SK-N-SH (cell line): ENCODE measurements at regions of chr14 and their contacts with region 1.

Region 1: GRCh38 chr14:23539248-23540140 is 12.1 kb downstream of the ZFHX2 start:
- DNase-seq: peak; percentile 92
- H3K4me3 ChIP-seq: no peak overlapping the region
- H3K27ac ChIP-seq: peak overlapping the region in 1 of 2 experiments; percentile 30; a peak in 1 of 4 replicates
- H3K4me1 ChIP-seq: peaks cover 4 to 8% of the 10 kb centered on the region in 2 experiments; a peak in 1 of 4 replicates
- H3K27me3 ChIP-seq: no peaks in the 10 kb centered on the region
- CTCF ChIP-seq: peak; percentile 75
- EP300 ChIP-seq: no peak
- RAD21 ChIP-seq: peak; percentile 79

Region 2: DNA sequence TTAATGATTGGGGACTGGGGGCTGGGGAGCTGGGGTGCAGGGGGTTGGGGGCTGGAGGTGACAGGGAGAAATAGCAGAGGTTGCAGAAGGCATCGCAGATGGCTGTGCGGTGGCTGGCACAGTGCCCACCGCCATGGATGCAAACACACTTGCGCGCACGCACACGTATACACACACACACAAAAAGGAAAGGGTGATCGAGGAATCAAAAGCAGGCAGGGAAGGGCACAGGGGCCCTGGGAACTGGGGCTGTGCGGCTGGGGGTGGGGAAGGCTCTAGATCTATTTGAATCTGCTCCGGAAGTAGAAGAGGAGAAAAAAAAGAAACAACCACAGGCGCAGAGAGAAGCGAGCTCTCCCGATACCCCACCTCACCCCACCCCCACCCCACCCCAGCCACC is 27.3 kb before region 1 on chr14:
- CTCF ChIA-PET with region 1: interaction called, 11 read pairs
- POLR2A ChIA-PET with region 1: interaction called, 3 read pairs
- DNase-seq: peak; percentile 77
- H3K4me3 ChIP-seq: peak overlapping the region in 1 of 2 experiments; percentile 34; a peak in 2 of 4 replicates
- H3K27ac ChIP-seq: peak overlapping the region in 1 of 2 experiments; percentile 63; a peak in 1 of 4 replicates
- H3K4me1 ChIP-seq: peaks cover 0 to 38% of the 10 kb centered on the region in 2 experiments; a peak in 1 of 4 replicates
- H3K27me3 ChIP-seq: no peaks in the 10 kb centered on the region
- CTCF ChIP-seq: no peak
- EP300 ChIP-seq: no peak
- RAD21 ChIP-seq: no peak

Region 3: GRCh38 chr14:23528555-23528954 is 10.9 kb before region 1 on chr14:
- CTCF ChIA-PET with region 1: interaction called, 25 read pairs
- POLR2A ChIA-PET with region 1: interaction called, 5 read pairs
- DNase-seq: peak; percentile 59
- H3K4me3 ChIP-seq: no peak overlapping the region
- H3K27ac ChIP-seq: no peak overlapping the region; a peak in 1 of 4 replicates
- H3K4me1 ChIP-seq: peaks cover 0 to 4% of the 10 kb centered on the region in 2 experiments; a peak in 1 of 4 replicates
- H3K27me3 ChIP-seq: no peaks in the 10 kb centered on the region
- CTCF ChIP-seq: peak; percentile 33; the same call in 1 of the 2 replicates
- EP300 ChIP-seq: no peak
- RAD21 ChIP-seq: no peak

Region 4: DNA sequence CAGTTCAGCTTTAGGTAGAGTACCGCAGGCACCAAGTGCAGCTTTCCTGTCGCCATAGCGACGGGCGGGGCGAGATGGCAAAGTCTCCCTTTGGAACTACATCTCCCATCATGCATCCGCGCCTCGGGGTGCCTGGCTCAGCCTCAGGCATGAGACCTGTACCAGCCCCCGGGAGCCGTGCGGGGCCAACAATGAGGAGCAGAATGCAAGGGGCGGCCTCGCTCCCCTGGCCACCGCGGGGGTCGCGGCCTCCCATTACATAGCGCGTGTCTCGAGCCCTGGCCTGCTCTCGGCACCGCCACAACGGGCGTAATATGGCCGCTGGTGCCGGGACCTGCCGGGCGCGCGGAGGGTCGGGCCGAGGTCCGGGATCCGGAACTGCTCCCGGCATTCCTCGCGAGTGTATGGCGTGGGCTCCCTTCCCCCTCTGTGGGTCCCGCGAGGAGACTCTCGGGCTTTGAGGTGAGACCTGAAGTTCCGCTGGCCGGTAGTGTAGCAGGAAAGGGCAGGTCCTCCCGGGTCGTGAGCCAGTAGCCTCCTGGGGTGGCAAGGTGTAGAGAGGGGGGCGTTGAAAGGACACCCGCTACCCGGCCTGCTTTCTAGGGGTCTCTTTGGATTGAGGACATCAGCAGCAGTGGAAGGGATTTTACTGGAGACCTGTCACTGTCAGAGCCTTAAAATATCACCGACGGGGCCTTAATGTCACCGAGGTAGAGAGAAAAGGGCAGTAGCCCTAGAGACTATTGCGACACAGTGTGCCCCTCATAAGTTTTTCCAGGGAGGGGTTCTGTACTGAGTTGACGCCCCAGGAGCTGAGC is 16.6 kb after region 1 on chr14 and contains the start of gene THTPA:
- CTCF ChIA-PET with region 1: interaction called, 136 read pairs
- POLR2A ChIA-PET with region 1: interaction called, 5 read pairs
- DNase-seq: peak; percentile 92
- H3K4me3 ChIP-seq: peak within 1 kb of the TSS; percentile 76 to 93
- H3K27ac ChIP-seq: peak within 1 kb of the TSS; percentile 74 to 91
- H3K4me1 ChIP-seq: peaks cover 5 to 15% of the 10 kb centered on the region in 2 experiments; a peak in 1 of 4 replicates
- H3K27me3 ChIP-seq: no peaks in the 10 kb centered on the region
- CTCF ChIP-seq: no peak
- EP300 ChIP-seq: no peak
- RAD21 ChIP-seq: no peak
- polyA plus RNA-seq, gene THTPA: 15.5 and 16.3 TPM in 2 replicates

Region 5: DNA sequence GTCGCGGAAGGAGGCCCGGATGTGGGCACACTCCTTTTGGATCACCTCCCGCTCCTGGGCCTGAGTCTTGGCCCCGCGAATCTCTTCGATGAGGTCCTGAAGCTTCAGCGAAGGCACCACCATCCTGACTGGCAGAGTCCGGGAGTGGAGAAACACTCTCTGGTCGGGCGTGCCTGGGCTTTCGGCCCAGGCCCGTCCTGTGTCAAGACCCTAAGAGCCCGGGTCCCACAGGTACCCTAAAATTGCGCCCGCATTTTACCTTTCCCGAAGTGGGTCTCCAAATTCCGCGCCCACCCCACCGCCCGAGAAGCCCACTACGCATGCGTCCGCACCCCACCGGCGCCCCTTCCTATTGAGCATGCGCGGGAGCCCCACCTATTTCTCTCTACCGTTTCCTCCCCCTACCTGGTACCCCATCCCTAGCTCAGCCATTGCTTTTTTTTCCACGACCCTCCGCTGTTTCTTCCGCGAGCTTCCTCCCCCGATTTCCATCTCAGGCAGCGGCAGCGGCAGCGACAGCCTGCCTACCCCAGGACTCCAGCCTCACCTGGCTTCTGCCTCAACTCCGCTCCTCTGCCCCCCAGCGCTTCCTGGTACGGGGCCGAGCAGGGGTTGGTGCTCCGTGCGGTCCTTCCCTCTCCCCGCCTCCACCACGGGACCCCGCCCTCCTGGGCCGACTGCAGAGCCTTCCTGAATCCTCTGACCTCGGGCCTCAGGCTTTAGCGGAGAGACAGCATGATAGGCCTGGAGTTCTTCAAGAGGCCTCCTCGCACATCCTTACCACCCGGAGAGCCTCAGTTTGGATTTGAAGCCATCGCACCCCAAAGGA is 27.9 kb after region 1 on chr14 and contains the start of gene AP1G2:
- CTCF ChIA-PET with region 1: interaction called, 136 read pairs
- POLR2A ChIA-PET with region 1: no interaction called
- DNase-seq: peak; percentile 92
- H3K4me3 ChIP-seq: peak within 1 kb of the TSS; percentile 64 to 86
- H3K27ac ChIP-seq: peak within 1 kb of the TSS; percentile 39 to 82; a peak in 3 of 4 replicates
- H3K4me1 ChIP-seq: peaks cover 0 to 34% of the 10 kb centered on the region in 2 experiments; a peak in 1 of 4 replicates
- H3K27me3 ChIP-seq: no peaks in the 10 kb centered on the region
- CTCF ChIP-seq: 0 out of 2 replicates have a peak, but pooled peaks have one; percentile 4
- EP300 ChIP-seq: no peak
- RAD21 ChIP-seq: no peak
- polyA plus RNA-seq, gene AP1G2: 88.3 and 114 TPM in 2 replicates

Region 6: DNA sequence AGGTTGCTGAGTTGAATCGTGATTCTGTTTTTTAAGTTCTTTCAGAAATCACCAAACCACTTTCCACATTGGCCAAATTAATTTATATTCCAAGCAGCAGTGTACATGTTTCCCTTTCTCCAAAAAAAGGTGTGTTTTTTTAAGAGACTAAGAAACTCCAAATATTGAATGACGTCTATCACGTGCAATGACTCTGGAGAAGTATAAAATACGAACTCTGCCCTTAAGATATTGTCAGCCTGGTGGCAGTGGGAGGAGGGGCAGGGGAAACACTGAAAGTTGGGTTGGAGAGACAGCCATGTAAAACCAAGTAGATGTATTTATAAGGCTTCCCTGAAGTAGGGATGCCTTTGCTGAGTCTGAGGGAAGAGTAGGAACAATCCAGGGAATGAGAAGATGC is 363.9 kb after region 1 on chr14:
- CTCF ChIA-PET with region 1: no interaction called
- POLR2A ChIA-PET with region 1: no interaction called
- DNase-seq: no peak
- H3K4me3 ChIP-seq: no peak overlapping the region
- H3K27ac ChIP-seq: no peak overlapping the region
- H3K4me1 ChIP-seq: no peaks in the 10 kb centered on the region
- H3K27me3 ChIP-seq: no peaks in the 10 kb centered on the region; the same call in 1 of the 2 replicates
- CTCF ChIP-seq: no peak
- EP300 ChIP-seq: no peak
- RAD21 ChIP-seq: no peak